Activated naive CD4-positive, alpha-beta T cell treated with anti-CD3 and anti-CD28 coated beads for 36 hours (primary cell): ENCODE measurements at regions of chr5 and their contacts with region 1.

Region 1: DNA sequence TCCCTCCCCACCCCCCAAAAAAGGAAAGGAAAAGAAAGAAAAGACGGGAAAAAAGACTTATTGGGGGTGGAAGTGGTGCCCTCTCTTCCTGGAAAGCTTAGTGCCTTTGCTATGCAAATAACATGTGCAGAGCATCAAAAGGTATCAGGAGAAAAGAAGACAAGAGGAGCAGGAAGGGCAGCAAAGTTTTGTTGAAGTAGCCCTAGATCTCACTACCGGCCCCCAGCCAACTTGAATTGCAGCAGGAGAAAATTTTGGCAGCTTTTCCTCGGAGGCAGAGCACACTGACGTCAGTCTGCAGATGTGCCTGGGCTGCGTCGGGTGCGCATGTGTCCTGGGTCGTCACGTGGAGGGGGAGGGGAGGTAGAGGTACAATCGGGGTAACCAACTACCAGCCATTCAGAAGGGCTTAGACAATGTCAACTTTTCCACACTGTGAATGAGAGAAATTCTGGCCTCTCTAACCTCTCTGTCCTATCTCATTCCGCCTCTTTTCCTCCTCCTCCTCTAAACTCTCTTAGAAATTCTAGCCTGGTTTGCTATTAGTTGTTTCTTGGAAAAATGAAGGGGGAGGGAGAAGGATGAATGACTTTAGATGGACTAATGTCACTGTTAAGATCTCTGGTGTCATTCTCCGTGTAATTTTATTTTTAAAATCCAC is at the start of gene ADAMTS6:
- DNase-seq: peak; percentile 85
- H3K4me3 Mint-ChIP-seq: no peak within 1 kb of the TSS
- H3K27ac Mint-ChIP-seq: peak within 1 kb of the TSS; percentile 38
- H3K4me1 Mint-ChIP-seq: peaks cover 6% of the 10 kb centered on the region
- H3K27me3 Mint-ChIP-seq: no peaks in the 10 kb centered on the region
- total RNA-seq, gene ADAMTS6: 0.86 to 0.93 TPM

Region 2: DNA sequence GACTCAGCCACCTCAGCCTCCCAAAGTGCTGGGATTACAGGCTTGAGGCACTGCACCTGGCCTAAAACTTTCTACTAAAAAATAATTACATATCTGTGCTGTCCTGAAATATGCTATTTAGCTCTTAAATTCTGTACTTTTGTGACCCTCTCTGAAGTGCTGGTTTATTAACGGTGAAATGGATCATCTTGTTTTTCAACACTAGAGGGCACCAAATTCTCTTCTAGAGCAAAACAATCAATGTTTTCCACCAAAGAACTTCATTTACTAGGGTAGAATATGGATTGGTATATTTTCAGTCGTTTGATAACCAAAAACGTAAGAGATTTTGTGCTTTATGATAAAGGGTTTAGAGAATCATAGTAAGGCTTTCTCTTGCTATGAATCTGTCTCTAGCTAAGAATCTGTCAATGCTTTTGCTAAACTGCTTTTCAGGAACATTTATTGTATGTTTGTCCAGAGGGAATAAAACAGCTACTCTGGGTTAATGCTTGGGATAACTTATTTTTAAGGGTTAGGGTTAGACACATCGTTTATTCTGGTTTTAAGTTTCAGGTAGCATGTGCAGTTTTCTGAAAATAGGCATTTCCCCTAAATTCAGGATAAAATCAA is 1252.5 kb before region 1 on chr5:
- CTCF ChIA-PET with region 1: no interaction called
- intact Hi-C with region 1: loop called (anchors 2 kb)
- DNase-seq: no peak
- H3K4me3 Mint-ChIP-seq: no peak overlapping the region
- H3K27ac Mint-ChIP-seq: no peak overlapping the region
- H3K4me1 Mint-ChIP-seq: no peaks in the 10 kb centered on the region
- H3K27me3 Mint-ChIP-seq: no peaks in the 10 kb centered on the region

Region 3: GRCh38 chr5:64784451-64785025 is 697.2 kb before region 1 on chr5:
- CTCF ChIA-PET with region 1: interaction called, 4 read pairs
- intact Hi-C with region 1: loop called (anchors 1 kb)
- DNase-seq: peak; percentile 89
- H3K4me3 Mint-ChIP-seq: no peak overlapping the region
- H3K27ac Mint-ChIP-seq: no peak overlapping the region
- H3K4me1 Mint-ChIP-seq: peaks cover 4% of the 10 kb centered on the region
- H3K27me3 Mint-ChIP-seq: no peaks in the 10 kb centered on the region

Region 4: DNA sequence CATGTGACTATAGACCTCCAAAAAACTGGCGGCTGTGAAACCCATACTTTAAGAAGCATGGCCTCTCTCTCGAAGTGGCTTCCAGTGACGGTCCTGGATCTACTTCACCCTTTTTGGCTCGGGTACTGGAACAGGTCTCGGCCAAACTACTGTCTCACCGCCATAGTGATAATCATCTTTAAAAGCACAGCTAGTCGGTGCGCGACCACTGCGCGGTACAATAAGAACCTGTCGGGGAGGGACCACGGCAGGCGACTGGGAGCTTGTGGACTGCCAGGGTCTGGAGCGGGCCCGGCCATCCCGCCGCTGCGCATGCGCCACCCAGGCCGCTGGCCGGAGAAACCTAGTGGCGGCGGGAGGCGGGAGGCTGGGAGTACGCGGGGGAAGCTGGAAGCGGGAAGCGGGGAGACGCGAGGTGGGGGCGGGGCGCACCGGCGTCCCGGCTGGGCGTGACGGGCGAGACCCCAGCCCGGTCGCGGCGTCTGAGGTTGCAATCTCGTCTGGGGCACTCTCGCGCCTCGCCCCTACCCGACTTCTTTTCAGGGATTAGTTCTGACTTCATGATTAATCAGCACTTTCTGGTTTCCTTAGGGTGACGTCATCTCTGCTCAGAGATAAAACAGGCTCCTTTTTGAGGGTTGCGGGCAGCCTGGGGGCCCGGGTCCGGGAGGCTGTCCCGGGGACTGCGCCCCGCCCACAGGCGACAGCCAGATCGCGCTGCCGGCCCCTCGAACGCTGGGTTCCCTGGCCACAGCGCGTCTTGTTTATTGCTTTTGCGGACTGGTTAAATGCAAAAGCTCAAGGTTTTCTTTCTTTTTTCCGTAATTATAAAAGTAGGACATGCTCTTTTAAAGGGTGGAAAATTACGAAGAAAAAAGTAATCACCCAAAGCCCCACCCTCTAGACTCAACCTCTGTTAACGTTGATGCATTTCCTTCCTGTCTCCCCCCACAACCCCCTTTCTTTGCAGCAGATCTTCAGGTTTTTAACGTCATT is 446.3 kb before region 1 on chr5:
- CTCF ChIA-PET with region 1: interaction called, 3 read pairs
- intact Hi-C with region 1: loop called (anchors 1 kb)
- DNase-seq: peak; percentile 80
- H3K4me3 Mint-ChIP-seq: peak overlapping the region; percentile 69
- H3K27ac Mint-ChIP-seq: peak overlapping the region; percentile 85
- H3K4me1 Mint-ChIP-seq: peaks cover 27% of the 10 kb centered on the region
- H3K27me3 Mint-ChIP-seq: no peaks in the 10 kb centered on the region

Region 5: GRCh38 chr5:65190328-65191053 is 291.3 kb before region 1 on chr5:
- CTCF ChIA-PET with region 1: no interaction called
- intact Hi-C with region 1: loop called (anchors 1 kb)
- DNase-seq: peak; percentile 35
- H3K4me3 Mint-ChIP-seq: no peak overlapping the region
- H3K27ac Mint-ChIP-seq: peak overlapping the region; percentile 65
- H3K4me1 Mint-ChIP-seq: peaks cover 14% of the 10 kb centered on the region
- H3K27me3 Mint-ChIP-seq: peaks cover 9% of the 10 kb centered on the region

Region 6: DNA sequence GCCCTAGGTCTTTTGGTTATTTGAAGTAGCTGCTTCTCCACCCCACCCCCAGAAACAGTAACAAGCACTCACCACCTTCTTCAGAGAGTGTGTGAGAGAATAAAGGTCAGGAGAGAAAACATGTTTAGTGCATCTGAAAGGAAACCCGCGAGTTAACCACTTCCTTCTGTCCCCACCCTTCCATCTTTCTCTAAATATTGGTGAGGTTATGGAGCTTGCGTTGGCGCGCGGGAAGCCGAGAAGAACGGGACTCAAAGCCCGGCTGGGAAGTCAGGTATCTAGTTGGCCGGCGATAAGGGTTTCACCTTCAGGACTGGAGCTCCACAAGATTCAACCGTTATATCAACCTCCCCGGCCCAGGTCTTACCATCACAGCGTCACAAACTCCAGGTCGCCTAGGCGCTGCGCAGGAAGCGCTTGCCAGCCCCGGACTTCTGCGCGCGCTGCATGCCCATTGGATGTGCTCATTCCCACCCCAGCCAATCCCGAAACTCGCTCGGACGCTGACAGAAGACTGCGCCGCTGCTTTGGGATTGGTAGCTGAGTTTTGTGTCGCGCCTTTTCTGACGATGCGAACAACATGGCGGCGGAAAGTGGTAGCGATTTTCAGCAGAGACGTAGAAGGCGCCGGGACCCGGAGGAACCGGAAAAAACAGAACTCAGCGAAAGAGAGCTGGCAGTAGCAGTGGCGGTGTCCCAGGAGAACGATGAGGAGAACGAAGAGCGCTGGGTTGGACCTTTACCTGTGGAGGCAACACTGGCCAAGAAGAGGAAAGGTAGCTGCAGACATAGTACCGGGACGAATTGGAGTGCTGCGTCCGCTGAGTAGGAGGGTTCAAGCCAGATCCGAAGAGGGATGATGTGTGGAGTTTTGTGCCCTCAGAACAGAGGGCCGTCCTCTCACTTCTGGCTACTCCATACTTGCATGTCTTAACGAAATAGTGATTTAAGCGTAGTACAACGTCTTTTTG is 81.3 kb after region 1 on chr5 and contains the starts of genes CENPK and PPWD1:
- CTCF ChIA-PET with region 1: no interaction called
- intact Hi-C with region 1: loop called (anchors 1 kb)
- DNase-seq: peak; percentile 98
- H3K4me3 Mint-ChIP-seq: peak within 1 kb of the TSS; percentile 98
- H3K27ac Mint-ChIP-seq: peak within 1 kb of the TSS; percentile 96
- H3K4me1 Mint-ChIP-seq: peaks cover 45% of the 10 kb centered on the region
- H3K27me3 Mint-ChIP-seq: no peaks in the 10 kb centered on the region
- total RNA-seq, gene CENPK: 80.9 to 83.1 TPM
- total RNA-seq, gene PPWD1: 33.6 to 33.9 TPM